Motor neuron (in vitro differentiated cells): ENCODE measurements at regions of chr6 and their contacts with region 1.

Region 1: DNA sequence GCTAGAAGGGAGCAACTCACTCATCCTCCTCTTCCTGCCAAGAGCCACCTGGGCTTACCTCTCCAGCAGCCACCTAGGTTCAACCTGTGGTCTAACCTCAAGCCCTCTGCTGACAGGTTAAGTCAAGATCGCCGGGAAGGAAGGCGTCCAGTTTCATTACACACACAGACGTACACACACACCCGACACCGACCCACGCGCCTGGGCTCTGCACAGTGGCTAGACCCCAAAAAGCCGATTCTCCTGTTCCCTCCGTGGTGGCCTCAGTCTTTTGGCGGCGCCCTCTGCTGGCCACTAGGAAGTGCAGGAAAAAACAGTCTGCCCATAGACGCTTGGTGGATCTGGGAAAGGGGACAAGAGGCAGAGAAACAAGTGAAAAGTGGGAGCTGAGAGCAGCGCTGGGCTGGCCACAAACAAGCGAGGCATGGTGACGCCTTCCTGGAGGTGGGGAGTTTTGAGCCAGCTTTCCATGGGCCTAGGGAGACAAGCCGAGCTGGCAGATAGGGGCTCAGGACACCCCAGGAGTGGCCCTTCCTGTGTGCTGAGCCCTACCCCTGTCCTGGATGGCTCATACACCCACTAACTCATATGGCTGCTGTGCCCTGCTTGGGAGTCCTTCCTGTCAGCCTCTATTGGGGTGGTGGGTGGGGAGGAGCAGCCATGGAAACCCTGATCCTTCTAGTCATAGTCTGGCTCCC is 52.7 kb downstream of the MRPL14 start:
- ATAC-seq: peak; percentile 20 to 64 (median 32)
- H3K4me3 ChIP-seq: no peak overlapping the region
- H3K27ac ChIP-seq: peak overlapping the region; percentile 71 to 88
- H3K4me1 ChIP-seq: peaks cover 47 to 60% of the 10 kb centered on the region in 2 donors

Region 2: DNA sequence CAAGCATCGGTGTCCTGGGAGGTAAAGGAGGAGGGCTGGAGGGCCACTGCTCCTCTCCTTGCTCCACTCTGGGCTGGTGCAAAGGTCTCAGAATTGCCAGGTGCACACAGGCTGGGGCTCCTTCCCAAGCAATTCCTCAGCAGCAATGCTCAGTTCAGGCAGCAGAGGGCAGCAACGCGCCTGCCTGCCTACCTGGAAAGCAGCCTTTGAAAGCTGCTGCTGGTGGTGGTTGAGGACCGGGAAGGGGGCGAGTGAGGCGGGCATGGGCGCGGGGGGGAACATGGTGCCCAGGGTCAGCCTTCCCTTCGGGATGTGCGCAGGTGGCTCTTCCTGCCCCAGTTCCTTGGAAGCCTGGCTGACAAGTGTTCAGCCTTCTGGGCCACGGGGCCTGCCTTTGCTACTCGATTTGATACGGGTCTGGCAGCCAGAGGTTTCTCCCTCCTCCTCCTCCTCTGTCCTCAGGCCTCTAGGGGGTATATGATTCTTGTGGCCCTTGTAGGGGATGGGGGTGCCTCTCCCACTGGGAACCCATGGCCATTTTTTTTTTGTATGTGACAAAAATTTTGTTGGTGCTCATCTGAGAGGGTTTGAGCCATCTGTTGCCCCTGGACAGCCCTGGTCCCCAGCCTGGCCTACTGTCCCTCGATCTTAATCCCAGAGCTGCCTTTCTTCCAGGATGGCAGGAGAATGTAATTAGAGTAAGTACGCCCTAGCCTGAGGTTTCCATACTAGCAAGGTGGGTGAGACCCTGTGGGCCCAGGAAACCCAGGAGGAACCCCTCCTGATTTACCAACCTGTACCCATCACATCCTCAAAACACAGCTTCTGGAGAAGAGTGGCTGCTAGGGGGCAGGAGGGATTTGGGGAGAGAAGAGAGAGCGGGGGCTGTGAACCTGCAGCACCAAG is 407.1 kb before region 1 on chr6:
- in situ Hi-C with region 1: loop called in 6 of 9 experiments (anchors 10 to 25 kb)
- ATAC-seq: peak; percentile 29 to 85 (median 76)
- H3K4me3 ChIP-seq: no peak overlapping the region
- H3K27ac ChIP-seq: peak overlapping the region in 1 of 2 donors; percentile 25
- H3K4me1 ChIP-seq: peaks cover 13 to 34% of the 10 kb centered on the region in 2 donors

Region 3: GRCh38 chr6:43769526-43770416 is 304.8 kb before region 1 on chr6 and contains the start of gene VEGFA:
- in situ Hi-C with region 1: loop called in 7 of 9 experiments (anchors 10 to 25 kb)
- ATAC-seq: peak; percentile 44 to 77 (median 70)
- H3K4me3 ChIP-seq: peak within 1 kb of the TSS; percentile 56 to 97 (median 91)
- H3K27ac ChIP-seq: peak within 1 kb of the TSS; percentile 97 to 99
- H3K4me1 ChIP-seq: peaks cover 10 to 29% of the 10 kb centered on the region in 2 donors
- total RNA-seq, gene VEGFA: 19.9 to 266 (median 164) TPM